ENCODE measurements at regions of chr3 and their contacts with region 1.

Region 1: DNA sequence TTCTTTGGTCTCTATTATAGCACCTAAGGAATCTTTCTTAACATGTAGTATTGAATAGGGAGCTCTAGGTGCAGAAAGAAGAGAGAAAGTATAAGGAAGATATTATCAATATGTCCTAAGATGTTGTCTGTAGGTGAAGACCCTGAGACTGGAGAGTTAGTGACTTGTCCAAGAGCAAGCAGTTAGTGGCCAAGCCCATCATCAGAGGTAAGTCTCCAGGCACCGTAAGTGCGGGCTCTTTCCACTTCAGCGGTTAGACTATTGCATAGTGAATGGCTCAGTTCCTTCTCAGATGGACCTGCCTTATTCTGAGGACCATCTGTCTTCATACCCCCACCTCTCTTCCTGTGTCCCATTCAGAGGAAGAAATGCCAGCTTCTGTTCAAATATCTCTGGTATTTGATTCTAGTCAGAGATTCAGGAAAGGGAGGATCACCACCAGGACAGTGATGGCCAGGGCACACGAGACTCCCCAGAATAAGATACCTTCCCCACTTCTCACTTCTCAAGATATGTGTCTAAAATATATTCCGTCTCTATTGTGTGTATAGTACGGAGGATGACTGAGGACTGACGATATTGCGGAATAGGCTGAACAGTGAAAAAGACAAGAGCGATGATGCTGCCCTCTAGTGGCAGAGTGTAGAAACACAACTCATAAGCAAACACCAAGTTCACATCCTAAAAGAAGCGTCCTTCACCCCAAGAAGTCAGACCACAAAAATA is 19.1 kb upstream of the ADGRG7 start:
- DNase-seq: peak; percentile 64
- H3K4me3 ChIP-seq: no peak overlapping the region
- H3K27ac ChIP-seq: no peak overlapping the region
- H3K4me1 ChIP-seq: peaks cover 0 to 25% (median 12%) of the 10 kb centered on the region in 4 donors
- H3K27me3 ChIP-seq: no peaks in the 10 kb centered on the region
- CTCF ChIP-seq: peak; percentile 85 to 92 (median 88)
- EP300 ChIP-seq: no peak
- POLR2A ChIP-seq: no peak

Region 2: GRCh38 chr3:99842826-99843589 is 747.3 kb before region 1 on chr3:
- in situ Hi-C with region 1: loop called in 3 of 4 experiments (anchors 25 kb)
- intact Hi-C with region 1: no loop called
- DNase-seq: no peak
- H3K4me3 ChIP-seq: no peak overlapping the region
- H3K27ac ChIP-seq: peak overlapping the region; percentile 65 to 85 (median 78)
- H3K4me1 ChIP-seq: peaks cover 13 to 41% (median 23%) of the 10 kb centered on the region in 4 donors
- H3K27me3 ChIP-seq: no peaks in the 10 kb centered on the region
- CTCF ChIP-seq: peak; percentile 63 to 88 (median 72)
- EP300 ChIP-seq: no peak
- POLR2A ChIP-seq: no peak

Region 3: DNA sequence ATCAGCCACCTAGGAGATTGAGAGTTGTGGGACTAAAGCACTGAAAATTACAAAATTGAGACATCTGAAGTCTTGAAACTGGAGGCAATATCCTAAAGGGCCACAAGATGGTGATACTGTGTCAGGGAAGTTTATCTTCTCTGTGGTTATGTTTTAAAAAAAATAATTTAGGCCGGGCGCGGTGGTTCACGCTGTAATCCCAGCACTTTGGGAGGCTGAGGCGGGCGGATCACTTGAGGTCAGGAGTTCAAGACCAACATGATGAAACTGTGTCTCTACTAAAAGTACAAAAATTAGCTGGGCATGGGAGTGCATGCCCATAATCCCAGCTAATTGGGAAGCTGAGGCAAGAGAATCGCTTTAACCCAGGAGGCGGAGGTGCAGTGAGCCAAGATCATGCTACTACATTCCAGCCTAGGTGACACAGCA is 273.6 kb before region 1 on chr3:
- in situ Hi-C with region 1: loop called in 2 of 4 experiments (anchors 10 to 25 kb)
- intact Hi-C with region 1: no loop called
- DNase-seq: no peak
- H3K4me3 ChIP-seq: no peak overlapping the region
- H3K27ac ChIP-seq: peak overlapping the region in 1 of 4 donors; percentile 10
- H3K4me1 ChIP-seq: peaks cover 0 to 6% (median 2%) of the 10 kb centered on the region in 4 donors
- H3K27me3 ChIP-seq: no peaks in the 10 kb centered on the region
- CTCF ChIP-seq: peak; percentile 60 to 78 (median 66)
- EP300 ChIP-seq: no peak
- POLR2A ChIP-seq: no peak

Region 4: GRCh38 chr3:100463002-100463401 is 127.3 kb before region 1 on chr3:
- in situ Hi-C with region 1: loop called (anchors 5 to 10 kb)
- intact Hi-C with region 1: loop called (anchors 2 kb)
- DNase-seq: no peak
- H3K4me3 ChIP-seq: no peak overlapping the region
- H3K27ac ChIP-seq: no peak overlapping the region
- H3K4me1 ChIP-seq: no peaks in the 10 kb centered on the region
- H3K27me3 ChIP-seq: no peaks in the 10 kb centered on the region
- CTCF ChIP-seq: peak; percentile 61 to 79 (median 67)
- EP300 ChIP-seq: no peak
- POLR2A ChIP-seq: no peak

Measured in transverse colon (tissue), 4 donors.